Heart left ventricle (tissue), 16 donors: ENCODE measurements at regions of chr7 and their contacts with region 1.

Region 1: GRCh38 chr7:113752289-113752688 is 166.5 kb downstream of the PPP1R3A start:
- DNase-seq: no peak
- ATAC-seq: no peak
- H3K4me3 ChIP-seq: no peak overlapping the region
- H3K27ac ChIP-seq: no peak overlapping the region
- H3K4me1 ChIP-seq: peaks cover 0 to 2% (median 0%) of the 10 kb centered on the region in 12 donors
- H3K27me3 ChIP-seq: no peaks in the 10 kb centered on the region
- CTCF ChIP-seq: no peak
- POLR2A ChIP-seq: no peak

Region 2: GRCh38 chr7:113349339-113349738 is 402.9 kb before region 1 on chr7:
- intact Hi-C with region 1: no loop called
- DNase-seq: no peak
- ATAC-seq: no peak
- H3K4me3 ChIP-seq: no peak overlapping the region
- H3K27ac ChIP-seq: no peak overlapping the region
- H3K4me1 ChIP-seq: no peaks in the 10 kb centered on the region
- H3K27me3 ChIP-seq: no peaks in the 10 kb centered on the region
- CTCF ChIP-seq: no peak
- POLR2A ChIP-seq: no peak

Region 3: GRCh38 chr7:113730309-113730955 is 21.9 kb before region 1 on chr7:
- intact Hi-C with region 1: loop called in 1 of 10 experiments (anchors 2 kb)
- DNase-seq: no peak
- ATAC-seq: no peak
- H3K4me3 ChIP-seq: no peak overlapping the region
- H3K27ac ChIP-seq: no peak overlapping the region
- H3K4me1 ChIP-seq: no peaks in the 10 kb centered on the region
- H3K27me3 ChIP-seq: no peaks in the 10 kb centered on the region
- CTCF ChIP-seq: no peak
- POLR2A ChIP-seq: no peak